ENCODE measurements at regions of chr5 and their contacts with region 1.

Region 1: DNA sequence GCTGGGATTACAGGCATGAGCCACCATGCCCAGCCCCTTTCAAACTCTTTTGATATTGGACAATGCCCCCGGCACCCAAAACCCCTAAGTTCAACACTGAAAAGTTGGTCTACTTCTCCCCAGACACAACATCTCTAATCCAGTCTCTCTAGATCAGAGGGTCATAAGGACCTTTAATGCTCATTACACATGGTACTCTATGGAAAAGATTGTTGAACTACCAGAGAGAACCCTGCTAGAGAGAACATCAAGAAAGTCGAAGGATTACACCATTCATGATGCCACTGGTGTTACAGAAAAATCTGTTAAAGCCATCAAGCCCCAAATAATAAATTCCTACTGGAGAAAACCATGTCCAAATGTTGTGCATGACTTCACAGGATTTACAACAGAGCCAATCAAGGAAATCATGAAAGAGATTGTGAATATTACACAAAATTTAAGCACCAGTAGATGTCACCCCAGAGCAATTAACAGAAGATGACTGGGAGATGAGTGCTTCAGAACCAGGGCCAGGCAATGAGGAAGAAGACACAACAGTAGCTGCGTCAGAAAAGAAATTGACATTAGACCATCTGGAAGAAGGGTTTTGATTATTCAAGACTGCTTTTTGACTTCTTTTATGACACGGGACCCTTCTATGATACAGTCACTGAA is 28.3 kb upstream of the NIPAL4 start:
- DNase-seq: peak; percentile 56 to 75 (median 72)
- H3K4me3 ChIP-seq: no peak overlapping the region
- H3K4me3 Mint-ChIP-seq: no peak overlapping the region
- H3K27ac ChIP-seq: no peak overlapping the region
- H3K27ac Mint-ChIP-seq: peak overlapping the region in 2 of 7 donors; percentile 30 to 78
- H3K4me1 ChIP-seq: no peaks in the 10 kb centered on the region
- H3K4me1 Mint-ChIP-seq: peaks cover 5% of the 10 kb centered on the region
- H3K27me3 ChIP-seq: no peaks in the 10 kb centered on the region
- H3K27me3 Mint-ChIP-seq: peaks cover 2 to 6% (median 5%) of the 10 kb centered on the region in 3 donors
- CTCF ChIP-seq: peak; percentile 70

Region 2: GRCh38 chr5:157471709-157472108 is 40.0 kb after region 1 on chr5:
- intact Hi-C with region 1: loop called (anchors 5 kb)
- DNase-seq: peak in 2 of 3 donors; percentile 26 to 32
- H3K4me3 ChIP-seq: no peak overlapping the region
- H3K4me3 Mint-ChIP-seq: no peak overlapping the region
- H3K27ac ChIP-seq: no peak overlapping the region
- H3K27ac Mint-ChIP-seq: peak overlapping the region in 2 of 7 donors; percentile 29 to 42
- H3K4me1 ChIP-seq: peaks cover 13 to 15% of the 10 kb centered on the region in 2 donors
- H3K4me1 Mint-ChIP-seq: peaks cover 14% of the 10 kb centered on the region
- H3K27me3 ChIP-seq: no peaks in the 10 kb centered on the region
- H3K27me3 Mint-ChIP-seq: peaks cover 0 to 3% (median 0%) of the 10 kb centered on the region in 3 donors
- CTCF ChIP-seq: peak; percentile 58

Measured in CD14-positive monocyte (primary cell).